Breast epithelium (tissue), 4 donors: ENCODE measurements at regions of chr1 and their contacts with region 1.

Region 1: DNA sequence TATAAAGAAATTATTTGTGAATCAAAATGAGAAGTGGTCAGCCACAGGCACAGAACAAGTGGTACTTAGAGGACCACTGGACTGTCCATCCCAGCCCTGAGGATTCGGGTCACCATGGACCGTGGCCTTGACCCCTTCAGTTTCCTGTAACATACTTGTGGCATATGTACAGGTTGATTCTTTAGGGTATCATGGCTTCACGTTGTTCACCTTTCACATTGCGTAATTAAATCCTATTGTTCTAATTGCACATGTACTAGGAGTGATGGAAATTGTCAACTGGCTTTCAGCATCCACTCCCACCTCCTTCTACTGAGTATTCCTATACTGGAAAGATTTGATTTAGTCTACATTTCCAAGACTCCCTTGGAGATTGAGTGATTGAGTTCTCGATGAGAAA is 148.3 kb upstream of the GJB5 start:
- DNase-seq: no peak
- H3K4me3 ChIP-seq: no peak overlapping the region
- H3K27ac ChIP-seq: no peak overlapping the region
- H3K4me1 ChIP-seq: no peaks in the 10 kb centered on the region
- H3K27me3 ChIP-seq: peaks cover 0 to 11% of the 10 kb centered on the region in 2 donors
- CTCF ChIP-seq: no peak
- POLR2A ChIP-seq: no peak

Region 2: DNA sequence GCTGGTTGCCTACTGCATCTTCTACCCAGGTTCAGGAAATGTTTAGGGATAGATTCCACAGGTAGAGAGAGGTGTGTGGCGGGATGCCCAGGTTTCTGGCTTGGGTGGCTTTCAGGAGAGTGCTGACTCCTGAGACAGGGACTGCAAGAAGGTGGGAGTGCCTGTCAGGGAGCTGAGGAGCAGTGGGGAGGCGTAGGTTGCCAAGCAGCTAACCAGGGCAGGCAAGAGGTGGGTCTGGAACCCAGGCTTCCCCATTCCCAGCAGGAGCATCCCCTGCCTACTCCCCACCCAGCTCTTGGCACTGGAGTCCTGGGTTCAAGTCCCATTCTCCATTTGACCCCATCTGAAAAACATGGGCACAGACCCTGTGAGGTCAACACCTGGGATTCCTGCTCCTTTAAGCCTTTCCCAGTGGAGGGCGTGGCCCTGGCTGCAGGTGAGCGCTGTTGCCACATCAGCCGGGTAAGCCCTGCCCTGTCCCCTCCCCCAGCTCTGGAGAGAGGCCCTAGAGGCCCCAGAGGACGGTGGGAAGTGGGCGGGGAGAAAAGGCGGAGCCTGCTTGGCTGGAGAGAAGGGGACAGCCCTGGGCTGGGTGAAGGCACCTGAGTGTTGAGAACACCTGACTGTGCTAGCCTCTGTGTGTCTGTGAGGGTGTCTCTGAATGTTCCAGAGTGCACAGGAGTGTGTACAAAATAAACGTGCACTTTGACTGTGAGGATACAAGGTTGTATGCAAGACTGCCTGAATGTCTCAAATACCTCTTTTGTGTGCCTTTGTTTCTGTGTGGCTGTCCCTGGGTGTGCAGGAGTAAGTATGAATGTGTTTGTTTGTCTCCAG is 1890.0 kb before region 1 on chr1:
- intact Hi-C with region 1: no loop called
- DNase-seq: peak; percentile 96
- H3K4me3 ChIP-seq: peak overlapping the region in 1 of 3 donors; percentile 17
- H3K27ac ChIP-seq: peak overlapping the region; percentile 89 to 92
- H3K4me1 ChIP-seq: peaks cover 0 to 6% of the 10 kb centered on the region in 2 donors
- H3K27me3 ChIP-seq: no peaks in the 10 kb centered on the region
- CTCF ChIP-seq: no peak
- POLR2A ChIP-seq: peak; percentile 23

Region 3: DNA sequence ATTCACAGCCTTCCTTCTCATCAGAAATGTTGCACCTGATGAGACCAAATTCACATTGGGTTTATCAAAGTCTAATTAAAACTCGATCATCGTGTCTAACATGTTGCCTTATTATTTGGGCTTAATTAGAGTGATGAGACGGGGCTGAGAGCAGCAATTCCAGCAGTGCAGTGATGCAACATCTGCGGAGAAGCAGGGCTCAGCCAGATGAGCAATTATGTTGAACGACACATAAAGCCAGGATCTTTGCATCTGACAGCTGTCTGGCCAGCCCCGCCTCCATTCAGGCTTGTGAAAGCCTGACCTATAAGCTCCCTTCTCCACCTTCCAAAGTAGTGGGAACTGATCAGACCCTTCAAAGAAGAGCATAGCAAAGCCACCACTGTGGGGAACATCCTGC is 320.0 kb before region 1 on chr1:
- intact Hi-C with region 1: loop called (anchors 5 kb)
- DNase-seq: no peak
- H3K4me3 ChIP-seq: no peak overlapping the region
- H3K27ac ChIP-seq: no peak overlapping the region
- H3K4me1 ChIP-seq: no peaks in the 10 kb centered on the region
- H3K27me3 ChIP-seq: peaks cover 0 to 12% of the 10 kb centered on the region in 2 donors
- CTCF ChIP-seq: no peak
- POLR2A ChIP-seq: no peak

Region 4: GRCh38 chr1:34590211-34590623 is 16.3 kb before region 1 on chr1:
- intact Hi-C with region 1: no loop called
- DNase-seq: no peak
- H3K4me3 ChIP-seq: no peak overlapping the region
- H3K27ac ChIP-seq: no peak overlapping the region
- H3K4me1 ChIP-seq: no peaks in the 10 kb centered on the region
- H3K27me3 ChIP-seq: no peaks in the 10 kb centered on the region
- CTCF ChIP-seq: no peak
- POLR2A ChIP-seq: no peak